HEK293T (cell line): ENCODE measurements at regions of chr11 and their contacts with region 1.

Region 1: GRCh38 chr11:76734456-76735420 is 48.4 kb upstream of the TSKU start:
- DNase-seq: no peak

Region 2: GRCh38 chr11:76715858-76716631 is 18.7 kb before region 1 on chr11:
- CTCF ChIA-PET with region 1: interaction called, 10 read pairs
- POLR2A ChIA-PET with region 1: no interaction called
- DNase-seq: no peak

Region 3: GRCh38 chr11:76721755-76722677 is 12.7 kb before region 1 on chr11:
- CTCF ChIA-PET with region 1: interaction called, 19 read pairs
- POLR2A ChIA-PET with region 1: no interaction called
- DNase-seq: peak; percentile 85

Region 4: DNA sequence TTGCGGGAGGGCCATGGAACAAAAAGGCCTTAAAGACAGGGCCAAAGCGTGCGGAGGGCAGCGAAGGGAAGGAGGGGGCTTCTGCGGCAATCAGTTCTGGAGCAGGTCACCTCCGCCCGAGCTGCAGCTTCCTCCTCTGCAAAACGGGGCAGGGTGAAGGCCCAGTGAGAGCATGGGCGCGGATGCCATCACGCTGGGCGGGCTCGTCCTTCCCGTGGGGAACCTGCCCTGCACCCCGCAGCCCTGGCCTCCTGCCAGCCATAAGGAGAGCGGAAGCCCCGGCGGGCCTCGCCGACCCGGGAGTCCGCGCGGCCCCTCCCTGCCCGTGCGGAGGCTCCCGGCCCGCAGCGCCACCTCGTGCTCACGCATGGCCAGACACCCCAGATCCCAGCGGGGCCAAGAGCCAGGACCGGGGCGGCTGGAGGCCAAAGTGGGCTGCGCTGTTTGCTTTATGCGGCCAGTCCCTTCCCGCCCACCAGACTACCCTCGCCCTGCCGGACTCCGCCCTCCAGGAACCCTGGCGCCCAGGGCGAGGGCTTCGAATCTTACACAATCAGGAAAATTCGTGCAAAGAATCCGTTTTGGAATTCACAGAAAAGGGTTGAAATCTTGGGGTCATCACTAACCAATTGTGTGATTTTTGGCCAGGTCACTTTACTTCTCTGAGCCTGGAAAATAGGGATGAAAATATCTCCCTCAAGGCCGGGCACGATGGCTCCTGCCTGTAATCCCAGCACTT is 64.5 kb after region 1 on chr11:
- CTCF ChIA-PET with region 1: interaction called, 20 read pairs
- POLR2A ChIA-PET with region 1: interaction called, 3 read pairs
- DNase-seq: peak; percentile 88

Region 5: DNA sequence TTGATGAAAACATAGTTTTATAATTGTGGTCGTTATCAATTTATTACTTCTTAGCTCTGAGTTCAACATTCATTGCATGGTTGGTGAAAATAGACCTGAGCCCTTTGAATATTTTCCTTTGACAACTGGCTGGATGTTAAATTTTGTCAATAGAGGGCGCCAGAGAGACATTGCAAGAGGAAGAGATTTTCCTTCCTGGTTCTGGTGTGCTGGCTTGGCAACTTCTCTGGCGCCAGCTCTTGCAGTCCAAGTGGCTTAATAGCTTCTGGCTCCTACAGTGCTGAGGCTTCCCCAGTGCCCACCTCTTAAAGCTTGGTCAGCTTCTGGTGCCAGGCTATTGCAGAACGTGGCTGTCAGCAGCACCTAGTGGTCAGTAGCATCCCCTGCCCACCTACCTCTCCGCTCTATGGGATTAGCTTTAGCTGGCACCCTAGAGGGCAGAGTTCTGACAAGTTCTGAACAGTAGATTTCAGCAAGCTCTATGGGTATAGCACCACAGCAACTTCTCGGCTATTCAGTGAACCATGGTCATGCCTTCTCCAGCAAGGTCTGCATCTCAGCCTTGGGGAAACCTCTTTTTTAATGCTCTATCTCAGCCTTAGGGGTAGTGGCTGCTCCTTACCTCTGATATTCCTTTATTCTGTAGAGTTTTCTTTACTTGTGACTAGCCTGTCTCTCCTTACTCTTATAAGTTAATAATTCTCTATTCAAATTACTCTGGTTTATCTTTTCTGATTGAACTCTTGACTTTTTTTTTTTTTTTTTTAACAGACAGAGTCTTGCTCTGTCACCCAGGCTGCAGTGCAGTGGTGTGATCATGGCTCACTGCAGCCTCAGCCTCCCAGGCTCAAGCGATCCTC is 185.4 kb after region 1 on chr11:
- CTCF ChIA-PET with region 1: interaction called, 17 read pairs
- POLR2A ChIA-PET with region 1: no interaction called
- DNase-seq: peak; percentile 70

Region 6: GRCh38 chr11:77236901-77237300 is 502.2 kb after region 1 on chr11:
- CTCF ChIA-PET with region 1: no interaction called
- POLR2A ChIA-PET with region 1: no interaction called
- DNase-seq: no peak